ENCODE measurements at regions of chr9 and their contacts with region 1.

Region 1: GRCh38 chr9:27561685-27562084 is 11.6 kb downstream of the C9orf72 start:
- DNase-seq: no peak
- ATAC-seq: no peak
- H3K4me3 ChIP-seq: no peak overlapping the region
- H3K4me3 Mint-ChIP-seq: no peak overlapping the region
- H3K27ac ChIP-seq: no peak overlapping the region
- H3K27ac Mint-ChIP-seq: no peak overlapping the region
- H3K4me1 ChIP-seq: peaks cover 0 to 4% of the 10 kb centered on the region in 2 donors
- H3K4me1 Mint-ChIP-seq: peaks cover 1 to 30% (median 24%) of the 10 kb centered on the region in 7 donors
- H3K27me3 ChIP-seq: no peaks in the 10 kb centered on the region
- H3K27me3 Mint-ChIP-seq: no peaks in the 10 kb centered on the region

Region 2: GRCh38 chr9:27514551-27514950 is 47.1 kb before region 1 on chr9:
- CTCF ChIA-PET with region 1: no interaction called
- POLR2A ChIA-PET with region 1: no interaction called
- intact Hi-C with region 1: loop called in 1 of 2 experiments (anchors 5 kb)
- DNase-seq: no peak
- ATAC-seq: no peak
- H3K4me3 ChIP-seq: no peak overlapping the region
- H3K4me3 Mint-ChIP-seq: no peak overlapping the region
- H3K27ac ChIP-seq: no peak overlapping the region
- H3K27ac Mint-ChIP-seq: no peak overlapping the region
- H3K4me1 ChIP-seq: no peaks in the 10 kb centered on the region
- H3K4me1 Mint-ChIP-seq: no peaks in the 10 kb centered on the region
- H3K27me3 ChIP-seq: no peaks in the 10 kb centered on the region
- H3K27me3 Mint-ChIP-seq: no peaks in the 10 kb centered on the region

Region 3: GRCh38 chr9:27548055-27548741 is 13.5 kb before region 1 on chr9:
- CTCF ChIA-PET with region 1: no interaction called
- POLR2A ChIA-PET with region 1: no interaction called
- intact Hi-C with region 1: loop called in 1 of 2 experiments (anchors 2 kb)
- DNase-seq: peak in 1 of 9 donors; percentile 21
- ATAC-seq: no peak
- H3K4me3 ChIP-seq: no peak overlapping the region
- H3K4me3 Mint-ChIP-seq: no peak overlapping the region
- H3K27ac ChIP-seq: no peak overlapping the region
- H3K27ac Mint-ChIP-seq: no peak overlapping the region
- H3K4me1 ChIP-seq: no peaks in the 10 kb centered on the region
- H3K4me1 Mint-ChIP-seq: peaks cover 0 to 2% (median 0%) of the 10 kb centered on the region in 7 donors
- H3K27me3 ChIP-seq: no peaks in the 10 kb centered on the region
- H3K27me3 Mint-ChIP-seq: no peaks in the 10 kb centered on the region

Region 4: DNA sequence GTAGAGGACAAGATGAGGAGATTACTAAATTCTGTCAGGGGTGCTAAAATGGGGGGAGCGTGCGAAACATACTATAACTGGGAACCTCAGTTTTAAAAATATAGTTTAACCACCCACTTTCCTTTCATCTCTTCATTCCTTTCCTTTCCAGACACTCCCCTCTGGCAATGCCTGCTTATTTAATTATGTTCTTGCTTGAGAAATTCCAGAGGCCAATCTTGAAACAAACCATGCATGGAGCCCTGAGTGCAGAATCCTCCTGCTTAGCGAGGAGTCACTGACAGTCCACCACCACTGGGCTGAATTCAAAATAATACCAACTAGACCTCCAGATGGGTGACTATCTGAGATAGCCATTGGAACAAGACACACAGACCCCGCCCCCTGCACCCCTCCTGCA is 41.3 kb after region 1 on chr9:
- CTCF ChIA-PET with region 1: no interaction called
- POLR2A ChIA-PET with region 1: no interaction called
- intact Hi-C with region 1: no loop called
- DNase-seq: no peak
- ATAC-seq: no peak
- H3K4me3 ChIP-seq: no peak overlapping the region
- H3K4me3 Mint-ChIP-seq: no peak overlapping the region
- H3K27ac ChIP-seq: no peak overlapping the region
- H3K27ac Mint-ChIP-seq: no peak overlapping the region
- H3K4me1 ChIP-seq: no peaks in the 10 kb centered on the region
- H3K4me1 Mint-ChIP-seq: peaks cover 0 to 1% (median 0%) of the 10 kb centered on the region in 7 donors
- H3K27me3 ChIP-seq: no peaks in the 10 kb centered on the region
- H3K27me3 Mint-ChIP-seq: peaks cover 0 to 9% (median 4%) of the 10 kb centered on the region in 5 donors

Region 5: GRCh38 chr9:27618066-27618465 is 56.4 kb after region 1 on chr9:
- CTCF ChIA-PET with region 1: no interaction called
- POLR2A ChIA-PET with region 1: no interaction called
- intact Hi-C with region 1: loop called in 1 of 2 experiments (anchors 10 kb)
- DNase-seq: no peak
- ATAC-seq: no peak
- H3K4me3 ChIP-seq: no peak overlapping the region
- H3K4me3 Mint-ChIP-seq: no peak overlapping the region
- H3K27ac ChIP-seq: no peak overlapping the region
- H3K27ac Mint-ChIP-seq: no peak overlapping the region
- H3K4me1 ChIP-seq: no peaks in the 10 kb centered on the region
- H3K4me1 Mint-ChIP-seq: no peaks in the 10 kb centered on the region
- H3K27me3 ChIP-seq: no peaks in the 10 kb centered on the region
- H3K27me3 Mint-ChIP-seq: peaks cover 4 to 21% (median 15%) of the 10 kb centered on the region in 5 donors